Right ventricle myocardium superior (tissue), 1 donor: ENCODE measurements at regions of chr1 and their contacts with region 1.

Region 1: DNA sequence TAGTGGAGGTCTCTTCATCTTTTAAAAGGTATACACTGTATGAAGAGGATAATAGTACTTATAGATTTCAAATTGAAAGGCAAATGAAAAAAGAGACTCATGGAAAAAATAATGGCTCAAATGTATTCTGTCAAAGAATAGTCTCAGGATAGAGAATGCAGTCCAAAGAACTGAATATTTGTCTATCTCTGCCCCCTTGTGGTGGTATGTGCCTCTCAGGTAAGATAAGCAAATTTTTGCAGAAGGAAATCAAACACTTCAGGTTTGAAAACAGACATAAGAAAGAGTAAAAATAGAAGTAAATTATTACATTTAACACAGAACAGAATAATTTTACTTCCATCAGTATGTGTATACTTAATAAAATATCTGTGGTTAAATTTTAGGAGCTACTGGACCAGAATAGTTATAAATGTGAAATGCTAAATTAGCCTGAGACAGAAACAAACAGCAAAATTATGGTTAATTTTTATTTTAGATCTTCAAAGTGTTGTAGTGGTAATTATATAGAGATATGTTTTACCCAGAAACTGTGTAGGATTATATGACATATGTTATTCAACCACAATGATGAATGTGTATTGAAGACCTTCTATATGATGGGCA is 164.4 kb upstream of the PALMD start:
- DNase-seq: no peak
- ATAC-seq: peak; percentile 83

Region 2: GRCh38 chr1:99180343-99180808 is 301.1 kb before region 1 on chr1:
- intact Hi-C with region 1: loop called (anchors 10 kb)
- DNase-seq: peak; percentile 53
- ATAC-seq: peak; percentile 97

Region 3: DNA sequence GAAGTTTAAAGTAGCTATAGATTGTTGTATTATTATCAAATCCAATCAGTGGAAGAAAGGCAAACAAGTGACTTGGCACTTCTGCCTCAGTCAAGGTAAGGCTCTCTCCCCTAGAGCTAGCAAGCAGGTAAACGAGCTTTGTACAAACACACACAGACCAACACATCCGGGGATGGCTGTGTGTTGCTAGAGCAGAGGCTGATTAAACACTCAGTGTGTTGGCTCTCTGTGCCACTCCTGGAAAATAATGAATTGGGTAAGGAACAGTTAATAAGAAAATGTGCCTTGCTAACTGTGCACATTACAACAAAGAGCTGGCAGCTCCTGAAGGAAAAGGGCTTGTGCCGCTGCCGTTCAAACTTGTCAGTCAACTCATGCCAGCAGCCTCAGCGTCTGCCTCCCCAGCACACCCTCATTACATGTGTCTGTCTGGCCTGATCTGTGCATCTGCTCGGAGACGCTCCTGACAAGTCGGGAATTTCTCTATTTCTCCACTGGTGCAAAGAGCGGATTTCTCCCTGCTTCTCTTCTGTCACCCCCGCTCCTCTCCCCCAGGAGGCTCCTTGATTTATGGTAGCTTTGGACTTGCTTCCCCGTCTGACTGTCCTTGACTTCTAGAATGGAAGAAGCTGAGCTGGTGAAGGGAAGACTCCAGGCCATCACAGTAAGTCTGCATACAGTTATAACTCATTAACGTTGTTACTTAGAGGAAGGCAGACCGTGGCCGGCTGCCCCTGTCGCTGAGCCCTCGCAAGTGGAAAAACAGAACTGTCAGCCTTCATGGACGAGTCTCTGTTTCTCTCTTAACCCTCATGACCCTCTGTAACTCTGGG is 164.4 kb after region 1 on chr1 and contains the start of gene PALMD:
- intact Hi-C with region 1: no loop called
- DNase-seq: peak; percentile 67
- ATAC-seq: peak; percentile 76
- total RNA-seq, gene PALMD: 114 TPM